Activated CD8-positive, alpha-beta memory T cell treated with anti-CD3 and anti-CD28 coated beads, Interleukin-2, amount 10 ng/mL, durations not matched to agents 7 days and 5 days (primary cell): ENCODE measurements at regions of chr15 and their contacts with region 1.

Region 1: DNA sequence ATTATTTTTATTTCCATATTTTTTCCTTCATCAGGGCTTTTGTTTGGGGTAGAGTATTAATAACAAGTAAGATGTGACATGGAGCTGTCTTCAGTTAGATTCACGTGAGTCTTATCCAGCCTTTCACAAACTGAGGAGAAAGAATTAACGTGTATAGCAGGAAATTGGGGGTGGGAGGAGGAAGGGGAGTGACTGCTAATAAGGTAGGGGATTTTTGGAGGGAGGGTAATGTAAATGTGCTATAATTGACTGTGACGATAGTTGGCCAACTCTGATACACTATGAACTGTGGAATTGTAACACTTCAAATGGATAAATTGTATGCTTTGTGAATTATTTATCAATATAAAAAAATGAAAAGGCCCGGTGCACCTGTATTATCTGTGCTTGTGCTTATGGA is 8.9 kb downstream of the DUT start:
- DNase-seq: no peak
- ATAC-seq: no peak
- H3K4me3 Mint-ChIP-seq: no peak overlapping the region
- H3K27ac Mint-ChIP-seq: no peak overlapping the region
- H3K4me1 Mint-ChIP-seq: peaks cover 33% of the 10 kb centered on the region
- H3K27me3 Mint-ChIP-seq: no peaks in the 10 kb centered on the region

Region 2: GRCh38 chr15:48273037-48273436 is 67.1 kb before region 1 on chr15:
- CTCF ChIA-PET with region 1: no interaction called
- DNase-seq: no peak
- ATAC-seq: no peak
- H3K4me3 Mint-ChIP-seq: no peak overlapping the region
- H3K27ac Mint-ChIP-seq: no peak overlapping the region
- H3K4me1 Mint-ChIP-seq: no peaks in the 10 kb centered on the region
- H3K27me3 Mint-ChIP-seq: peaks cover 14% of the 10 kb centered on the region

Region 3: DNA sequence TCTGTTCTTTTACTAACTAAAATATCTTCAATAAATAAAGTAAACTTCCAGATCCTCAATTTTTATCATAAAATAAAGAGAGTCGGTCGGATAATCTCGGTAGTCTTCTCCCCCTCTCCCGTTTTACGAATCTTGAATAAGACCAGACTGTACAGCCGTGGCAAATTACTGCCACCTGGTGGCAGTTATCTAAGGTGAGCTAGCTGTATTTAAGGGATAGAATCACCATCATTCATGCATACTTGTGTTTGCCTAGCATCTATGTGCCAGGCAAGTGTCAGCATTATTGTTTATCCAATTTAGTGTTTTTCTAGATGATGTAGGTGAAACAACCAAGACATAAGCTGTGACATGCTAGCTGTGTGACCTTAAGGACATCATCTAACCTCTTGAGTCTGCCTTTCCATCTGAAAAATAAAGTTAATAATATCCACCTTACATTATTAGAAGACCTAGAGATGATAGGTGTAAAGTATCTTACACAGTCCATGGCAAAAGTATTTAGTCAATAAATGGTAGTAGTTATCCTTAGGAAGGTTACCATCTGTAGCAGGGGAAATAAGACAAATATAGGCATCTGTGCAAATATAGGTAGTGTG is 12.5 kb after region 1 on chr15:
- CTCF ChIA-PET with region 1: interaction called, 26 read pairs
- DNase-seq: peak; percentile 72
- ATAC-seq: peak; percentile 83
- H3K4me3 Mint-ChIP-seq: no peak overlapping the region
- H3K27ac Mint-ChIP-seq: no peak overlapping the region
- H3K4me1 Mint-ChIP-seq: peaks cover 4% of the 10 kb centered on the region
- H3K27me3 Mint-ChIP-seq: peaks cover 4% of the 10 kb centered on the region